Ovary (tissue), 10 donors: ENCODE measurements at regions of chr12 and their contacts with region 1.

Region 1: DNA sequence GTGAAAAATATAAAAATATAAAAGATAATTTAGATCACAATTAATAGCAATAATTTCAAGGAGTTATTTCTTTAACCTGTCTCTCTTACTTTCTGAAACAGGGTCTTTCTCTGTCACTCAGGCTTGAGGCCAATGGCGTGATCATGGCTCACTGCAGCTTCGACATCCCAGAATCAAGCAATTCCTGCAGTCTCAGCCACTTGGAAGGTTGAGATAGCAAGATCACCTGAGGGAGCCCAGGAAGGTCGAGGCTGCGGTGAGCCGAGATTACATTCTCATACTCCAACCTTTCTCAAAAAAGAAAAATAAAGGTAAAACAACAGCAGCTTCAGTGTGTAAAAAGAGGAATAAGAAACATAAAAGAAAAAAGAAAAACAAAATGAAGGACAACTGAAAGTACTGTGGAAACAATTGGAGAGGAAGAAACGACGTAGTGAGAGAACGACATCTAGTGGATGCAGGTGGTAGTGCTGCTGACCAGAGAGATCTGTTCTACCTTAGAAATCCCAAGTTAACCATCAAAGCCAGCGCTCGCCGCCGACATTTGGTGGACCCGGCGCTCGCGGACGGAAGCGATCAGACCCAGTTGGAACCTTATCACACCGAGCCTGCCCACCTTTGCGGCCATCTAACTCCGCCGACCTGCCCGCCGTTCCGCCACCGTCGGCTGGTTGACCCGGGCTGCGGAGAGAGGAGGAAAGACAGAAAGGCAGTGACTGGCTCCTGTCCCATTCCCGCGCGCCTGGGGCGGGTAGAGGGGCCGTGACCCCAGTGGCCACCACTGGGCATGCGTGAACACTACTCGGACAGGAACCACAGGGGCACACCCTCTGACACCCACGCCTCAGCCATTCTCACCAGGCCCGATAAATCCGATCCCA is 196.1 kb downstream of the ALG10 start:
- DNase-seq: peak; percentile 54 to 70 (median 57)
- H3K4me3 ChIP-seq: peak overlapping the region; percentile 23
- H3K27ac ChIP-seq: no peak overlapping the region
- H3K4me1 ChIP-seq: no peaks in the 10 kb centered on the region
- H3K27me3 ChIP-seq: no peaks in the 10 kb centered on the region
- CTCF ChIP-seq: peak; percentile 27 to 60 (median 53)
- EP300 ChIP-seq: no peak
- POLR2A ChIP-seq: no peak

Region 2: GRCh38 chr12:34022079-34022830 is 196.2 kb before region 1 on chr12 and contains the start of gene ALG10:
- intact Hi-C with region 1: no loop called
- DNase-seq: peak; percentile 95 to 96 (median 96)
- H3K4me3 ChIP-seq: peak within 1 kb of the TSS; percentile 72
- H3K27ac ChIP-seq: peak within 1 kb of the TSS; percentile 65 to 78
- H3K4me1 ChIP-seq: no peaks in the 10 kb centered on the region
- H3K27me3 ChIP-seq: no peaks in the 10 kb centered on the region
- CTCF ChIP-seq: peak; percentile 49 to 69 (median 51)
- EP300 ChIP-seq: no peak
- POLR2A ChIP-seq: peak; percentile 19
- total RNA-seq, gene ALG10: 8.2 to 12.3 (median 9.9) TPM

Region 3: GRCh38 chr12:34126239-34126641 is 92.2 kb before region 1 on chr12:
- intact Hi-C with region 1: loop called in 3 of 4 experiments (anchors 5 to 10 kb)
- DNase-seq: no peak
- H3K4me3 ChIP-seq: no peak overlapping the region
- H3K27ac ChIP-seq: no peak overlapping the region
- H3K4me1 ChIP-seq: peaks cover 4% of the 10 kb centered on the region
- H3K27me3 ChIP-seq: no peaks in the 10 kb centered on the region
- CTCF ChIP-seq: no peak
- EP300 ChIP-seq: no peak
- POLR2A ChIP-seq: no peak

Region 4: DNA sequence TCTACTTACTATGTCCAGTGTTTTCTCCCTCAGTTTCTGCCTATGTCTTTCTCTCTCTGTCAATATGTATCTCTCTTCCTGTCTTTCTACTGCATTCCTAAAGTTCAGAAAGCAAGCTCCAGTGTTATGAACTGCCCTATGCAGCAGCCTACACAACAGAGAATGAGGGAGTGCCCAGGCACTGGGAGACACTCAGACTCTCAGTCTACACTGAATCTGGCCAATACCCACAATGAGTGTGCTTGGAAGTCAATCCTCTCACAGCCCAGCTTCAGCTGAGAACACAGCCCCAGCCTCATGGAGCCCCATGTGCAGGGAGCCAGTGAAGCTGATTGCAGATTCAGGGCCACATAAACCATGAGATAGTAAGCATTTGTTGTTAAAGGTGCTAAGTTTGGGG is 67.4 kb before region 1 on chr12:
- intact Hi-C with region 1: no loop called
- DNase-seq: no peak
- H3K4me3 ChIP-seq: no peak overlapping the region
- H3K27ac ChIP-seq: peak overlapping the region in 1 of 2 donors; percentile 15
- H3K4me1 ChIP-seq: peaks cover 3% of the 10 kb centered on the region
- H3K27me3 ChIP-seq: no peaks in the 10 kb centered on the region
- CTCF ChIP-seq: no peak
- EP300 ChIP-seq: no peak
- POLR2A ChIP-seq: no peak